ENCODE measurements at regions of chr2 and their contacts with region 1.

Region 1: GRCh38 chr2:10220902-10221391 is 81.8 kb upstream of the HPCAL1 start:
- DNase-seq: peak; percentile 64

Region 2: GRCh38 chr2:10392951-10393644 is 172.2 kb after region 1 on chr2:
- intact Hi-C with region 1: loop called in 1 of 2 experiments (anchors 1 kb)
- DNase-seq: no peak

Region 3: DNA sequence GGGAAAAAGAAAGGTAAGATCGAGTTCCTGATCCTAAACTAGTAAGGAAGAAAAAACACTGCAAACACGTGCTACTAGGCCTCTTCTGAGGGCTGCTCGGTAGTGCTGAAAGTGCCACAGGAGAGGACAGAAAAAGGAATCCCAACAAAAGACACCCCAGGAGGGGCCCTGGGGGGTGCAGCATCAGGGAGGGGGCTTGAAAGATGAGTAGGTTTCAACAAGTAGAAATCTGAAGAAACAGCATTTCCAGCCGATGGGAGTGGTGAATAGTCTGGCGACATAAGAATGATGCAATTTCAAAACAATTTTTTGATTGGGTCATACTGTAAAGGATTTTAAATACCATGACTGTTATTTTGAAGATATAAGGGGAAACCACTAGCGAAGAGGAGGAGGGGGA is 370.3 kb after region 1 on chr2:
- intact Hi-C with region 1: loop called in 1 of 2 experiments (anchors 5 kb)
- DNase-seq: no peak

Measured in posterior vena cava (tissue), 2 donors.